Posterior vena cava (tissue), 2 donors: ENCODE measurements at regions of chr17 and their contacts with region 1.

Region 1: DNA sequence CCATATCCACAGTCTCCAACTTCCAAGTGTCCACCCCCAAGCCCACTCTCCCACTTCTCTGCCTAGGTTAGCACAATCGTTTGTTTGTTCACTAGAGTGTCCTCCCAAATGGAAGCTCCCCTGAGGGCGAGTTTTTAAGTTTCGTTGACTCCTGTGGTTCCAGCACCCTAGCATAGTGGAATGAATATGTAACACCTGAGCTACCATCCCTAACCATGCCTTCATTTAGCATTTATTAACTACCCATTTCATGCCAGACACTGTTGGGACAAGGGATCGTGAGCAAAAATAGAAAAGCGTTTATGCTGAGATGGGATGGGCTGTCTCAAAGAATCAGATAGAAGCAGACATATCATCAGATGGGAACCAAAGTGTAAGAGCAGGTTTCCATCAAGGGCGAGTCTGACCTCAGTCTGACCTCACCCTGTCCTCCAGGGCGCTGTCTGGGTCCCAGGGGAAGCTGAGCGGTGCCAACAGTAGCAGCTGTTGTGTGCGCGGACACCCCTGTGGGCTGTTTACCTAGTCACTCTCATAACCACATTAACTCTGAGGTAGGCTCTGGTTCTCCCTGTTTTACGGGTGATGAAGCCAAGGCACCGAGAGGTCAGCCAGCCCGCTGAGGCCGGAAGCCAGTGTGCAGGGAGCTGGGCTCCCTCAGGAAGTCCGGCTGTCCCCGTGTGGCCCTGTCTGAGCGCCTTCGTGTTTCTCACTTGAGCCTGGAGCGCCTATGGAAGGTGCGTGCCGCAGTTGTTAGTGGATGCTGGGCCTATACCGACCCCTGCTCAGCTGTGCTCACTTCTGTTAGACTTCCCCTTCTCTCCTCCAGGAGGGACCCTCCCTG is 6.2 kb downstream of the CNP start:
- DNase-seq: peak; percentile 80

Region 2: GRCh38 chr17:41918314-41919164 is 54.3 kb before region 1 on chr17 and contains the start of gene ACLY:
- intact Hi-C with region 1: no loop called
- DNase-seq: peak; percentile 99
- total RNA-seq, gene ACLY: 97.5 to 101 TPM

Region 3: DNA sequence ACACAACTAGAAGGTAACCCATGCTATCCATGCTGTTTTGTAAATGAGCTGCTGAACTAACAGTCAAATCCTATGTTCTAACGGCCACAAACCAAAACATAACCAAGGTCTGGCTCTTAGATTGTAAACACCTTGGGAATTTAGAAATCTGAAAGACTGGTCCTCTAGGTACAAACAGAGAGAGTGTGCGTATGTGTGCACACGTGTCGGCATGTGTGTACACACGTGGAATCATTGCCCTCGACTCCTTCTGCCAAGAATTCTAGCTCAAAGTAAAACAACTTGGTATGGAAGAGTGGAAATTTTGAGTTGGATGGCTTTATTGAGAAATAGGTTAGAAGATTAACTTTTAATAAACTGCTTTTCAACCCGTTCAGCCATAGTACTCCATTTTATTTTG is 239.6 kb after region 1 on chr17:
- intact Hi-C with region 1: no loop called
- DNase-seq: peak; percentile 35

Region 4: GRCh38 chr17:42937712-42938596 is 965.2 kb after region 1 on chr17:
- intact Hi-C with region 1: loop called in 1 of 2 experiments (anchors 10 kb)
- DNase-seq: no peak